PC-3 (cell line): ENCODE measurements at regions of chr14 and their contacts with region 1.

Region 1: GRCh38 chr14:72558721-72559120 is 335.2 kb downstream of the DPF3 start:
- DNase-seq: peak; percentile 49
- ATAC-seq: peak; percentile 41
- H3K4me3 ChIP-seq: no peak overlapping the region
- H3K27ac ChIP-seq: peak overlapping the region; percentile 22; the same call in 1 of the 2 replicates
- H3K4me1 ChIP-seq: peaks cover 14% of the 10 kb centered on the region
- H3K27me3 ChIP-seq: no peaks in the 10 kb centered on the region
- CTCF ChIP-seq: no peak

Region 2: GRCh38 chr14:72377016-72377415 is 181.7 kb before region 1 on chr14:
- CTCF ChIA-PET with region 1: no interaction called
- POLR2A ChIA-PET with region 1: no interaction called
- intact Hi-C with region 1: no loop called
- DNase-seq: no peak
- ATAC-seq: no peak
- H3K4me3 ChIP-seq: no peak overlapping the region
- H3K27ac ChIP-seq: no peak overlapping the region
- H3K4me1 ChIP-seq: no peaks in the 10 kb centered on the region
- H3K27me3 ChIP-seq: peaks cover 15% of the 10 kb centered on the region
- CTCF ChIP-seq: no peak

Region 3: GRCh38 chr14:72638021-72638420 is 79.3 kb after region 1 on chr14:
- CTCF ChIA-PET with region 1: no interaction called
- POLR2A ChIA-PET with region 1: no interaction called
- intact Hi-C with region 1: loop called (anchors 5 kb)
- DNase-seq: peak; percentile 91
- ATAC-seq: peak; percentile 50
- H3K4me3 ChIP-seq: no peak overlapping the region
- H3K27ac ChIP-seq: peak overlapping the region; percentile 90
- H3K4me1 ChIP-seq: peaks cover 51% of the 10 kb centered on the region
- H3K27me3 ChIP-seq: no peaks in the 10 kb centered on the region
- CTCF ChIP-seq: no peak